ENCODE measurements at regions of chr1 and their contacts with region 1.

Region 1: GRCh38 chr1:171781176-171781875 is at the start of gene METTL13:
- DNase-seq: peak; percentile 99
- H3K4me3 Mint-ChIP-seq: peak within 1 kb of the TSS; percentile 93
- H3K27ac Mint-ChIP-seq: peak within 1 kb of the TSS; percentile 88
- H3K4me1 Mint-ChIP-seq: peaks cover 57% of the 10 kb centered on the region
- H3K27me3 Mint-ChIP-seq: no peaks in the 10 kb centered on the region
- total RNA-seq, gene METTL13: 55.6 and 56.5 TPM in 2 replicates

Region 2: DNA sequence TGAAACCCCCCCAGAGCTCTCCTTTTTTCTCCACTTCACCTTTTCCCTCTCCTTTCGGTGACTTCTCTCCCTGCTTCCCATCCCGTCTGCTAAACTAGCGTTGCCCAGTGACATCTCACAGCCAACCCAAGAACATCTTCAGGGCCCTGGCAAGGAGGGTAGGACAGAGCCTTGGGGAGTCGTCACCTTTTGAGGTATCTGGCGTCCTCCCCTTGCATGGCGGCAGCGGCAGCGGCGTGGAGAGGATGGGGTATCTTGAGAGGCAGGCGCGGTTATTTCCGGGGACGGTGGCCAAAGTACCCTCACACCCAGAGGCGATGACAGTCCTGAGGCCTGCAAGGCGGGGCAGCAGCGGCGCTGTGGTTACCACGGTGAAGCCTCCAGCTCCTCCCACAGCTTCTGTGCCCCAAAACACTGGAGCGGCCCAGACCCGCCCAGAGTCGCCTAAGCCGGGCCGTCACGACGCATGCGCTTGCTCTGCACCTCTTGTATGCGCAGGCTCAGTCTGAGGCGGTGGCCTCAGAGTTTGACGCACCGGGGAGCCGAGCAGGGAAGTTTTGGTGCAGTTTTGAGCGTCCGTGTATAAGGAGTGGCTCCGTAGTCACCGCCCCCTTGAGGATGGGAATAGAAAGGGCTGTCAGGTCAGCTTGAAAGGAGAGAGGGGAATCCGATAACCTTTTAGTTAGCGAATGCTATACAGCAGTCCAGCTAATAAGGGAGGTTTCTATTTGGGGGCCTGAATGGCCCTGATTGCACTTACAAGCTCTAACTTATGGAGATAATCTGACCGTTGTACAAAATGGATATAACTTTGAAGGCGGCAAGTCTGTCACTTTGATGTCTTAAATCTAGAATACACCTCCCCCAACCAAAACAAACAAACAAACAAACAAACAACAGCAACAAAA is 1706.8 kb before region 1 on chr1 and contains the start of gene KIFAP3:
- intact Hi-C with region 1: loop called (anchors 5 kb)
- DNase-seq: peak; percentile 95
- H3K4me3 Mint-ChIP-seq: peak within 1 kb of the TSS; percentile 95
- H3K27ac Mint-ChIP-seq: peak within 1 kb of the TSS; percentile 96
- H3K4me1 Mint-ChIP-seq: peaks cover 45% of the 10 kb centered on the region
- H3K27me3 Mint-ChIP-seq: no peaks in the 10 kb centered on the region
- total RNA-seq, gene KIFAP3: 12.9 and 13.5 TPM in 2 replicates

Region 3: GRCh38 chr1:171654942-171655745 is 126.2 kb before region 1 on chr1:
- intact Hi-C with region 1: loop called (anchors 1 kb)
- DNase-seq: peak; percentile 54
- H3K4me3 Mint-ChIP-seq: peak overlapping the region; percentile 60
- H3K27ac Mint-ChIP-seq: no peak overlapping the region
- H3K4me1 Mint-ChIP-seq: peaks cover 13% of the 10 kb centered on the region
- H3K27me3 Mint-ChIP-seq: peaks cover 25% of the 10 kb centered on the region

Region 4: GRCh38 chr1:171769171-171769570 is 12.2 kb before region 1 on chr1:
- intact Hi-C with region 1: no loop called
- DNase-seq: no peak
- H3K4me3 Mint-ChIP-seq: no peak overlapping the region
- H3K27ac Mint-ChIP-seq: no peak overlapping the region
- H3K4me1 Mint-ChIP-seq: no peaks in the 10 kb centered on the region
- H3K27me3 Mint-ChIP-seq: peaks cover 14% of the 10 kb centered on the region

Region 5: DNA sequence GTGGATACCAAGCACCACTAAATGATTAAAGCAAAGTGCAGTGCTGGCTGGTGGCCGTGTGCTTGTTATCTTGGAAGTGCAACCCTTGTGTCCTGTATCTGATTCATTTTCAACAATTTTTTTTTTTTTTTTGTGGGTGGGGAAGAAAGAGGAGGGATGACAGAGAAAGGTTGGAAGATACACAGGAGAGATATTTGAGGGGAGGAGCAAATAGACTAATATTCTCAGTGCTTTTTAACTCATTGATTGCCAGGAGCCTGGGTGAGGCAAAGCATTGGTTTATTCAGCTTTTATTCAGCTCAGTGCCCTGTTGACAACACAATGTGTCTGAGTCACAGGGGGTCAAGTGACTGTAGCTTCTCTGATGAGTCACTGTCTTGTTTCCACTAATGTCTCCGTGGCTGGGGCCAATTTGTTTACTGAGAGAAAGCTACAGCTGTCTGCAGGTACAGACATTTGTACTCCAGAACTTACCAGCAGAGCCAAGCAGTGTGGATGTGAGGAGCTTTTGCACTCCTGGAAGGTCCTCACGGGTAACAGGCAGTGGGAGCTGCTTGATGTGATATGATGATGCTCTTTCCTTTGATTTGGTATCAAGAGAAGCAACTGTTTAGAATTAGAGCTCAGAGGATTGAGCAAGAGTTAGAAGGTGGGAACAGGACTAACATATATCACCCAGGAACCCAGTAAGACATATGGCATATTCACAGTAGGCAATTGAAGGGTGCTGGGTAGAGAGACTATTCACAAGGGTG is 36.4 kb after region 1 on chr1:
- intact Hi-C with region 1: loop called (anchors 1 kb)
- DNase-seq: peak; percentile 31
- H3K4me3 Mint-ChIP-seq: peak overlapping the region; percentile 61
- H3K27ac Mint-ChIP-seq: peak overlapping the region; percentile 90
- H3K4me1 Mint-ChIP-seq: peaks cover 31% of the 10 kb centered on the region
- H3K27me3 Mint-ChIP-seq: no peaks in the 10 kb centered on the region

Region 6: GRCh38 chr1:173476664-173477285 is 1695.4 kb after region 1 on chr1:
- intact Hi-C with region 1: loop called (anchors 10 kb)
- DNase-seq: peak; percentile 74
- H3K4me3 Mint-ChIP-seq: peak overlapping the region; percentile 92
- H3K27ac Mint-ChIP-seq: peak overlapping the region; percentile 93
- H3K4me1 Mint-ChIP-seq: peaks cover 65% of the 10 kb centered on the region
- H3K27me3 Mint-ChIP-seq: no peaks in the 10 kb centered on the region

Measured in activated T-helper 1 cell treated with anti-CD3 and anti-CD28 coated beads, Interleukin-12 subunit alpha, Interleukin-12 subunit beta, Interleukin-2, Interleukin-4 antibody, amounts not matched to agents 30 ng/mL and 10 ng/mL and 1 ng/mL, durations not matched to agents 14 hours and 24 hours and 36 hours (primary cell).